ENCODE measurements at regions of chr9 and their contacts with region 1.

Region 1: DNA sequence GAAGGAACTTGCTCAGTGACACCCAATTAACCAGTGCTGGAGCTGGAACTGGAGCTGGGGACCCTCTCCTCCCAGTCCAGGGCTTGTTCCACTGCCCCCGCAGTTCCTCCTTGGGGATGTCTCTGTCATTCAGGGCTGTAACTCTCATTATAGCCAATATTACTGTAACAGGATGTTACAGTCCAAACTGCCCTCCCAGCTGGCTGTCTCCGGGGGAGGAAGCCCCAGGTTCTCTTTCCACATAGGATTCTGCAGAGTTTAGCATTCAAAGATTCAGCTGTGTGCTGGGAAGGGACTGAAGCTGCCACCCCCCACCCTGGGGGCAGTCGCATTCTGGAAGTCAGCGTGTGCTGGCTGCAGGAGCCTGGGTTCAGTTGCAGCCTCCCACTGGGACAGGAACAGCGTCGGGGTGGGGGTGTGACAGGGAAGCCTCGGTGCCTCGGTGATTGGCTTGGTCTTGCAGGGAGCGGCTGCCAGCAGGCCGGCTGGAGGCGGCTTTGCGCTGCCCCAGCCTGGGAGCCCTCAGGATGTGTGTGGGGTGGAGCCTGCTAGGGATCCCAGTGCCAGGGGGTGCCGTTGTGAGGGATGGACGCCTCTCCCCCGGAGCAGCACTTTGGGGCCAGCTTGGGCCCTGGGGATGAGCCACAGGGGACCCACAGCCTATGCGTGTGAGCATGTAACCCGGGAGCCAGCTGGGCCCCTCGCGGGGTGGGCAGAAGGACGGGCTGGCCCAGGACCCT is 101.1 kb downstream of the RGS3 start:
- DNase-seq: peak; percentile 90 to 91
- ATAC-seq: peak; percentile 85
- H3K4me3 ChIP-seq: peak overlapping the region; percentile 31 to 66
- H3K27ac ChIP-seq: peak overlapping the region; percentile 32 to 89
- H3K4me1 ChIP-seq: peaks cover 3 to 6% of the 10 kb centered on the region in 2 donors
- H3K27me3 ChIP-seq: no peaks in the 10 kb centered on the region

Region 2: GRCh38 chr9:113454914-113455761 is 109.5 kb before region 1 on chr9:
- intact Hi-C with region 1: loop called in 1 of 2 experiments (anchors 5 kb)
- DNase-seq: peak in 1 of 2 donors; percentile 84
- ATAC-seq: peak; percentile 93
- H3K4me3 ChIP-seq: no peak overlapping the region
- H3K27ac ChIP-seq: peak overlapping the region; percentile 79 to 95
- H3K4me1 ChIP-seq: peaks cover 5 to 8% of the 10 kb centered on the region in 2 donors
- H3K27me3 ChIP-seq: no peaks in the 10 kb centered on the region

Region 3: GRCh38 chr9:113523421-113524236 is 41.0 kb before region 1 on chr9:
- intact Hi-C with region 1: loop called in 1 of 2 experiments (anchors 5 kb)
- DNase-seq: peak in 1 of 2 donors; percentile 84
- ATAC-seq: peak; percentile 22
- H3K4me3 ChIP-seq: no peak overlapping the region
- H3K27ac ChIP-seq: peak overlapping the region; percentile 20 to 68
- H3K4me1 ChIP-seq: peaks cover 2 to 11% of the 10 kb centered on the region in 2 donors
- H3K27me3 ChIP-seq: no peaks in the 10 kb centered on the region

Region 4: GRCh38 chr9:113622600-113623400 is 58.1 kb after region 1 on chr9:
- intact Hi-C with region 1: no loop called
- DNase-seq: peak; percentile 79 to 90
- ATAC-seq: peak; percentile 2
- H3K4me3 ChIP-seq: no peak overlapping the region
- H3K27ac ChIP-seq: peak overlapping the region in 1 of 2 donors; percentile 41
- H3K4me1 ChIP-seq: no peaks in the 10 kb centered on the region
- H3K27me3 ChIP-seq: no peaks in the 10 kb centered on the region